ENCODE measurements at regions of chr3 and their contacts with region 1.

Region 1: GRCh38 chr3:32467333-32468070 is 35.1 kb downstream of the CMTM6 start:
- DNase-seq: peak; percentile 84
- ATAC-seq: peak; percentile 79
- H3K4me3 Mint-ChIP-seq: peak overlapping the region; percentile 56
- H3K27ac Mint-ChIP-seq: peak overlapping the region; percentile 84
- H3K4me1 Mint-ChIP-seq: peaks cover 62% of the 10 kb centered on the region
- H3K27me3 Mint-ChIP-seq: no peaks in the 10 kb centered on the region
- CTCF ChIP-seq: peak; percentile 90

Region 2: GRCh38 chr3:32018757-32019564 is 448.5 kb before region 1 on chr3:
- CTCF ChIA-PET with region 1: no interaction called
- POLR2A ChIA-PET with region 1: no interaction called
- intact Hi-C with region 1: no loop called
- DNase-seq: no peak
- ATAC-seq: peak; percentile 65
- H3K4me3 Mint-ChIP-seq: no peak overlapping the region
- H3K27ac Mint-ChIP-seq: no peak overlapping the region
- H3K4me1 Mint-ChIP-seq: peaks cover 12% of the 10 kb centered on the region
- H3K27me3 Mint-ChIP-seq: no peaks in the 10 kb centered on the region
- CTCF ChIP-seq: no peak

Region 3: DNA sequence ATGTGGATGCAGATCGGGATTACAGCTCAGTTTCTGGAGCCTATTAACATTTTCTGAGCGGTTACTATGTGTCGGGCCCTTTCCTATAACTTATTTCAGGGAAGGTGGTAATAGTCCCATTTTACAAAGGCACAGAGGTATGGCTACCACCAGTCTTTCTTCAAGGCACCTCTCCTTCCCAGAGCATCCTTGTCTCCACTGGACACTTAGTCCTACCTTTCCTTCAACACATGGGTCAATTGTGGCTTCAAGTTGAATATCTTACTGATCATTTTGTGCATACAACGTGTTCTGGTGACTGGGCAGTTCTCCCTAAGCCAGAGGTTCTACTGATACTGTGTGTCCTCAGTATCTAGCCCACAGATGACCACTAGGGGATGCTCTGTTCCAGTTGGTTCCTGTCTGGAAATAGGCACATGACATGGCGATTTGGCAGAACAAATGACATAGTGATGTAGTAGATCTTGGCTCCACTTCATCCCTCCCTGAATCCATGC is 289.8 kb before region 1 on chr3:
- CTCF ChIA-PET with region 1: interaction called, 10 read pairs
- POLR2A ChIA-PET with region 1: no interaction called
- intact Hi-C with region 1: loop called (anchors 2 kb)
- DNase-seq: no peak
- ATAC-seq: peak; percentile 69
- H3K4me3 Mint-ChIP-seq: no peak overlapping the region
- H3K27ac Mint-ChIP-seq: no peak overlapping the region
- H3K4me1 Mint-ChIP-seq: peaks cover 21% of the 10 kb centered on the region
- H3K27me3 Mint-ChIP-seq: peaks cover 1% of the 10 kb centered on the region
- CTCF ChIP-seq: no peak

Region 4: DNA sequence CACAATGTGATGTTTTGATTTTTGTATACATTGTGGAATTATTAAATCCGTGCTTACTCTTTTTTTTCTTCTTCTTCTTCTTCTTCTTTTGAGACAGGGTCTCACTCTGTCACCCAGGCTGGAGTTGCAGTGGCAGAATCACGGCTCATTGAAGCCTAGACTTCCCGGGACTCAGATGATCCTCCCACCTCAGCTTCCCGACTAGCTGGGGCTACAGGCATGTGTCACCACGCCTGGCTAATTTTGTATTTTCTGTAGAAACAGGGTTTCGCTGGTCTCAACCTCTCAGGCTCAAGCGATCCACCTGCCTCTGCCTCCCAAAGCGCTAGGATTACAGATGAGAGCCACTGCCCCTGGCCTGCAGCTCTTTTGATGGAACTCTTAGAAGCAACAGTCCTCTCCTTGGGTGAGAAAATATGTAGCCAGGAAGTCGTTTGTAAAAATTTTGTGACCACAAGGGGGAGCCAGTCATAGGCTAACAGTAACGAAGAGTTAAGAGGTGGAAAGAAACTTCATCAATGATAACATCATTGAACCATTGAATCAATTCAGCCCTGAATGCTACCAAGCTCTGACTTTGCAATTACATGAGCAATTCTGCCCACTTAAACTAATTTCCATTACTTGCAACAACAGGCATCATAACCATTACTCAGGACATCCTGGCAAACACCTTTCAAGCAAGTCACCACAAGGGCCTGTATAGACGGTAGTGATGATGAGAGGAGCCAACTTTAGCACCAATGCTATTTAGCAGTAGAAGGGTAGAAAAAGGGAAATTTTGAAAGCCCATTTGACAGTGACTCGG is 92.5 kb before region 1 on chr3:
- CTCF ChIA-PET with region 1: interaction called, 174 read pairs
- POLR2A ChIA-PET with region 1: interaction called, 14 read pairs
- intact Hi-C with region 1: loop called (anchors 1 kb)
- DNase-seq: peak; percentile 18
- ATAC-seq: peak; percentile 75
- H3K4me3 Mint-ChIP-seq: no peak overlapping the region
- H3K27ac Mint-ChIP-seq: peak overlapping the region; percentile 50
- H3K4me1 Mint-ChIP-seq: peaks cover 28% of the 10 kb centered on the region
- H3K27me3 Mint-ChIP-seq: no peaks in the 10 kb centered on the region
- CTCF ChIP-seq: no peak

Region 5: GRCh38 chr3:32401556-32402081 is 65.9 kb before region 1 on chr3:
- CTCF ChIA-PET with region 1: interaction called, 33 read pairs
- POLR2A ChIA-PET with region 1: interaction called, 11 read pairs
- intact Hi-C with region 1: loop called (anchors 1 kb)
- DNase-seq: peak; percentile 45
- ATAC-seq: peak; percentile 71
- H3K4me3 Mint-ChIP-seq: peak overlapping the region; percentile 89
- H3K27ac Mint-ChIP-seq: peak overlapping the region; percentile 97
- H3K4me1 Mint-ChIP-seq: peaks cover 86% of the 10 kb centered on the region
- H3K27me3 Mint-ChIP-seq: no peaks in the 10 kb centered on the region
- CTCF ChIP-seq: no peak

Region 6: GRCh38 chr3:32420126-32421038 is 47.1 kb before region 1 on chr3:
- CTCF ChIA-PET with region 1: interaction called, 33 read pairs
- POLR2A ChIA-PET with region 1: interaction called, 21 read pairs
- intact Hi-C with region 1: loop called (anchors 1 kb)
- DNase-seq: peak; percentile 51
- ATAC-seq: peak; percentile 81
- H3K4me3 Mint-ChIP-seq: peak overlapping the region; percentile 76
- H3K27ac Mint-ChIP-seq: peak overlapping the region; percentile 88
- H3K4me1 Mint-ChIP-seq: peaks cover 91% of the 10 kb centered on the region
- H3K27me3 Mint-ChIP-seq: no peaks in the 10 kb centered on the region
- CTCF ChIP-seq: no peak

Region 7: GRCh38 chr3:32448686-32449474 is 18.6 kb before region 1 on chr3:
- CTCF ChIA-PET with region 1: interaction called, 12 read pairs
- POLR2A ChIA-PET with region 1: no interaction called
- intact Hi-C with region 1: no loop called
- DNase-seq: no peak
- ATAC-seq: no peak
- H3K4me3 Mint-ChIP-seq: no peak overlapping the region
- H3K27ac Mint-ChIP-seq: peak overlapping the region; percentile 9
- H3K4me1 Mint-ChIP-seq: peaks cover 57% of the 10 kb centered on the region
- H3K27me3 Mint-ChIP-seq: no peaks in the 10 kb centered on the region
- CTCF ChIP-seq: no peak

Region 8: GRCh38 chr3:32502118-32502945 is 34.8 kb after region 1 on chr3 and contains the start of gene CMTM6:
- CTCF ChIA-PET with region 1: interaction called, 7 read pairs
- POLR2A ChIA-PET with region 1: interaction called, 7 read pairs
- intact Hi-C with region 1: loop called (anchors 2 kb)
- DNase-seq: peak; percentile 67
- ATAC-seq: peak; percentile 80
- H3K4me3 Mint-ChIP-seq: peak within 1 kb of the TSS; percentile 98
- H3K27ac Mint-ChIP-seq: peak within 1 kb of the TSS; percentile 90
- H3K4me1 Mint-ChIP-seq: peaks cover 41% of the 10 kb centered on the region
- H3K27me3 Mint-ChIP-seq: no peaks in the 10 kb centered on the region
- CTCF ChIP-seq: no peak
- total RNA-seq, gene CMTM6: 84.6 and 90.1 TPM in 2 replicates

Region 9: GRCh38 chr3:32551087-32551486 is 83.6 kb after region 1 on chr3:
- CTCF ChIA-PET with region 1: no interaction called
- POLR2A ChIA-PET with region 1: no interaction called
- intact Hi-C with region 1: no loop called
- DNase-seq: no peak
- ATAC-seq: peak; percentile 18
- H3K4me3 Mint-ChIP-seq: peak overlapping the region; percentile 4
- H3K27ac Mint-ChIP-seq: peak overlapping the region; percentile 21
- H3K4me1 Mint-ChIP-seq: peaks cover 56% of the 10 kb centered on the region
- H3K27me3 Mint-ChIP-seq: no peaks in the 10 kb centered on the region
- CTCF ChIP-seq: no peak

Measured in activated B cell treated with CpG ODN at 0.5 μM for 24 hours (primary cell).